AG04449 (cell line): ENCODE measurements at regions of chr10 and their contacts with region 1.

Region 1: DNA sequence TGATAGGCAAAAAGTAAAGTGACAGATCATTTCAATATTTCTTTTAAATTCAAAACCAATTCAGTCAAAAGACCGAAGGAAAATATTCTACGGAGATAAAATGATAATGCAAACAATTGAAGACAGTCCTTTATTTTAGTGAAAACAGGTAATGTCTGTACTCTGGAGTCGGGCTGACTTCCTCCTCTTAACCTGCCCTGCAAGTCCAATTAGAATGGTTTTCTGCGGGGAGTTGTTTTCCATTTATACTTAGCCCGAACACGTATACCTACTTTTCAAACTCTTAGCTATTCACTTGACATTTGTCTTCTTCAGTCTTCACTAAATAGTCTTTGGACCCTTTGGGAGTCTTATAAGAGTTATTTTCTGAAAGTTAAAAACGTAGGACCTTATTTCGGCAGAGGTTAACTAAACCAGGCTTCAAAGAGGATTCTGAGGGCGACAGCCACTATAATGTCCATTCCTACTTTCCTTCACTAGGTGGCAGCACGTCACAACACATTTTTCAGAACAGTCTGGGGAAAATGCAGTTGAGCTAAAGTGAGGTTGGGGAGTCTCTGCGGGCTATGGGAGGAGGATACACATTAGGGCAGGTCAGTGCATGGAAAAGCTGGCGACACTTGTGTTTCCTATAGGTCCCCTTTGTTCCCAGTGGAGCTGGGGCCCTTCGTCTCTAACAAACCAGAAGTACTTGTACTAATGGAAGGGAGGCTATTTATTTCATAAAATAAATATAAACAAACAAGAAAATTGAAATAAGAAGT is 472.0 kb downstream of the KCNMA1 start:
- DNase-seq: no peak
- H3K4me3 ChIP-seq: no peak overlapping the region
- CTCF ChIP-seq: peak; percentile 73

Region 2: GRCh38 chr10:77111611-77112550 is 53.7 kb before region 1 on chr10:
- CTCF ChIA-PET with region 1: no interaction called
- POLR2A ChIA-PET with region 1: no interaction called
- DNase-seq: peak; percentile 52
- H3K4me3 ChIP-seq: no peak overlapping the region
- CTCF ChIP-seq: peak; percentile 62

Region 3: GRCh38 chr10:77245953-77246352 is 80.3 kb after region 1 on chr10:
- CTCF ChIA-PET with region 1: interaction called, 17 read pairs
- POLR2A ChIA-PET with region 1: no interaction called
- DNase-seq: no peak
- H3K4me3 ChIP-seq: no peak overlapping the region
- CTCF ChIP-seq: no peak

Region 4: DNA sequence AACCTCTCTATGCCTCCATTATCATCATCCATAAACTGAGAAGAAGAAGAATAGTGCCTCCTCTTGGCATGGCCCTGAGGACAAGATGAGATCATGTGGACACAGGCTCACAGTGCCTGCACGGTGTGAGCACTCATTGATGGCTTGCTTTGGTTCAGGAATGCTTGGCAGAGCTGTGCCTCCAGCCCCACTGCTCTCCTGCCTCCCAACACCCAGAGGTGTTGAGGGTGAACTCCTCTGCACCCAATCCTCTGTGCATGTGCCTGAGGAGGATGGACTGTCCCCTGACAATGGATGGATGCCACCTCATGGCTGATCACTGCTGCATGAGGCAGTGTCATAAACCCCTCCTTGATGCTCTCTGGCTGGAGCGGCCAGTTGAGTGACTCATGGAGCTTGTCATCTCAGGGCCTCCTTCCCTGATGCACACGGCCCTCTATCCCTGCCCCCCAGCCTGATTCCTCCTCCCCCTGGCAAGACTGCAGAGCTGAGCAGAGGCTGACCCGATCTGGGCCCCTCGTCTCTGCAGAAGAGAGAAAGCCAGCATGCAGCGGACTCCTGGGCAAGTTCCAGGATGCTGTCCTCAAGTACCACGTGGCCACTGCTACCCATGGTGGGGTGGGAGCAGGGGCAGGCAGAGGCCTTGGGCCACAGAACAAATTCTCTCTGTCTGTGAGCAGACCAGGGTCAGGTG is 335.7 kb after region 1 on chr10:
- CTCF ChIA-PET with region 1: interaction called, 13 read pairs
- POLR2A ChIA-PET with region 1: no interaction called
- DNase-seq: peak; percentile 82
- H3K4me3 ChIP-seq: no peak overlapping the region
- CTCF ChIP-seq: no peak

Region 5: DNA sequence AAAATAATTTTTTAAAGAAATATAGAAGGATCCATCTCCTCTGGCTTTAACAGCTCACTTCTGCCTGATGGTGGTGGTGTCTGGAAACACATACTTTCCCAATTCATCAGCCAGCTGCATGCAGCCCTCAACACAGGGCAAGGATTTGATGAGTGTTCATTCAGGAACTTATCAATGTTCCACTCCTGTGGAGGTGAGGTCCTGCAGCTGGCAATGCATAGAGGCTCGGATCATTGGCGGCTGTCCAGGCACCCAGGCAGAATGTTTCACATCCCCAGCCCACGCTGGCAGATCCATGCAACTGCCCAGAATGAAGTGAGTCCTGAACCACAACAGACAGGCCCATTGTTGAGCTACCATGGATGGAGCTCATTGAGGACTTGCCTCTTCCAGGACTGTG is 527.2 kb after region 1 on chr10:
- CTCF ChIA-PET with region 1: interaction called, 13 read pairs
- POLR2A ChIA-PET with region 1: no interaction called
- DNase-seq: peak; percentile 38
- H3K4me3 ChIP-seq: no peak overlapping the region
- CTCF ChIP-seq: peak; percentile 5